ENCODE measurements at regions of chr10 and their contacts with region 1.

Region 1: DNA sequence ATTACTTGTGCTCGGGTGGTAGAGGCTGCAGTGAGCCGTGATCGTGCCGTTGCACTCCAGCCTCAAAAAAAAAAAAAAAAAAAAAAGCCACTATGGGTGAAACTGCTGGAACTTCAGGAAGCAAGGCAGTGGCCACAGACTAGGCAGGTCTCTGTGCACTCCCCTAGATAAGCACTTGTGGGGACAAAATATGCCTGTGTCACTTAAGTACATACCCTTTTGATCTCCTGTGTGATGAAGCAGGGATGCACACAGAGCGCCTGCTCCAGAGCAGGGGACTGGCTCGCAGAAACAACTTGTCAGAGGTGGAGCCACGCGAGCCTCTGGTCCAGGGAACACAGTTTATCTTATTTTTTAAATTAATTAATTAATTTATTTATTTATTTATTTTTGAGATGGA is 42.9 kb upstream of the PSAP start:
- DNase-seq: no peak
- H3K4me3 ChIP-seq: no peak overlapping the region
- H3K27ac ChIP-seq: no peak overlapping the region
- H3K4me1 ChIP-seq: peaks cover 18% of the 10 kb centered on the region
- CTCF ChIP-seq: no peak

Region 2: DNA sequence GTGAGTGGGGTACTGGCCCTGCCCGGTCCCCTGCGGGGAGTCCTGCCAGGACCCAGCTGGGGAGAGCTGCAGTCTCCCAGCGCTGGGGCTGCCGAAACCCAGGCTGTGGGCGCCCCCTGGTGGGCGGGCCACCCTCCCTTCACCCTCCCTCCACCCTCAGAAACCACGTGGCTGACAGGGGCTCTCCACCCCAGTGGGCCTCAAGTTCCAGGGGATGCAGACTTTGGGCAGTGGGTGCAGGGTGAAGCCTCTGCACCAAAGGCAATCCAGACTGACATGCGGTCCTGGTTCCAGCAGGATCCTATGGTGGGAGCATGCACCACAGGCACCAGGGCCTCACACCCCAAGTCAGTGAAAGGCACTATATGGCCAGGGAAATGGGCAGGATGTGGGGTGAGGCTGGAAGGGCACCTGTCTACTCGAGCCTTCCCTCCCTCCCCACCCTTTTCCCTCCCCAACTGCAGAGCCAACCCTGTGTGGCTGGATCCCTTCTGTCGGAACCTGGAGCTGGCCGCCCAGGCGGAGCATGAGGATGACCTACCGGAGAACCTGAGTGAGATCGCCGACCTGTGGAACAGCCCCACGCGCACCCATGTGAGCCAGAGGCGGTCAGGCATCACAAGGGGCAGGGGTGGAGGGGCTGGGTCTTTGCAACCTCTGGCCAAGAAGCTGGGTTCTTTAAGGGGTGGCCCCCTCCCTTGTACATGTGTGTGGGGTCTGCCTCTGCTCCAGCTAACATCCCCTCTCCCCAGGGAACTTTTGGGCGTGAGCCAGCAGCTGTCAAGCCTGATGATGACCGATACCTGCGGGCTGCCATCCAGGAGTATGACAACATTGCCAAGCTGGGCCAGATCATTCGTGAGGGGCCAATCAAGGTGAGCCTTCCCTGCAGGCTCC is 81.7 kb before region 1 on chr10:
- CTCF ChIA-PET with region 1: interaction called, 4 read pairs
- POLR2A ChIA-PET with region 1: no interaction called
- intact Hi-C with region 1: loop called (anchors 1 kb)
- DNase-seq: peak; percentile 80
- H3K4me3 ChIP-seq: no peak overlapping the region
- H3K27ac ChIP-seq: no peak overlapping the region
- H3K4me1 ChIP-seq: peaks cover 6% of the 10 kb centered on the region
- CTCF ChIP-seq: peak; percentile 97

Region 3: DNA sequence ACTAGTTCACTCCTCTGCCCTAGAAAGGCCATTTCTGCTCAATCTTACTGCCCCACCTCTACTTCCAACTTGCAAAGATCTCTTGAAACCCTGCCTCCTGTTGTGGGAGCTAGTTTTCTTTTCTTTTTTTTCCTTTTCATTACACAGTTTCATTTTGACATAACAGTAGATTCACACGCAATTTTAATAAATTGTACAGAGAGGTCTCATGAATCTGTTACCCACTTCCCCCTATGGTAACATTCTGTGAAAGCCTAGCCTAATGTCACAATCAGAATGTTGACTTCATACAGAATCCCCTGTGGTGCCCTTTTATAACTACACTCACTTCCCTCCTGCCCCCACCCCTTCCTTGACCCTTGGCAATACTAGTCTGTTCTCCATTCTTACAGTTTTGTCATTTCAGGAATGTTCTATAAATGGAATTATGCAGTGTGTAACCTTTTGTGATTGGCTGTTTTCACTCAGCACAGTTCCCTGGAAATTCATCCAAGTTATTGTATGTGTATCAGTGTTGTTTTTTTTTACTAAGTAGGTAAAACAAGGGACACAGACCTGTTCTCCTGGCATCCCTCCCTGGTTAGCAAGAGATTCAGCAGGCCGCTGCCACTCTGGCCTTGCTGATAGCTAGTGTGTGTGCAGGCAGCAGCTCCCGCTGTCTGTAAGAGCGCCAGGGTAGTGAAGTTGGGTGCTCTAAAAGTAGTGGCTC is 91.8 kb after region 1 on chr10:
- CTCF ChIA-PET with region 1: no interaction called
- POLR2A ChIA-PET with region 1: no interaction called
- intact Hi-C with region 1: no loop called
- DNase-seq: no peak
- H3K4me3 ChIP-seq: no peak overlapping the region
- H3K27ac ChIP-seq: no peak overlapping the region
- H3K4me1 ChIP-seq: no peaks in the 10 kb centered on the region
- CTCF ChIP-seq: no peak